T-cell (primary cell): ENCODE measurements at regions of chr1 and their contacts with region 1.

Region 1: DNA sequence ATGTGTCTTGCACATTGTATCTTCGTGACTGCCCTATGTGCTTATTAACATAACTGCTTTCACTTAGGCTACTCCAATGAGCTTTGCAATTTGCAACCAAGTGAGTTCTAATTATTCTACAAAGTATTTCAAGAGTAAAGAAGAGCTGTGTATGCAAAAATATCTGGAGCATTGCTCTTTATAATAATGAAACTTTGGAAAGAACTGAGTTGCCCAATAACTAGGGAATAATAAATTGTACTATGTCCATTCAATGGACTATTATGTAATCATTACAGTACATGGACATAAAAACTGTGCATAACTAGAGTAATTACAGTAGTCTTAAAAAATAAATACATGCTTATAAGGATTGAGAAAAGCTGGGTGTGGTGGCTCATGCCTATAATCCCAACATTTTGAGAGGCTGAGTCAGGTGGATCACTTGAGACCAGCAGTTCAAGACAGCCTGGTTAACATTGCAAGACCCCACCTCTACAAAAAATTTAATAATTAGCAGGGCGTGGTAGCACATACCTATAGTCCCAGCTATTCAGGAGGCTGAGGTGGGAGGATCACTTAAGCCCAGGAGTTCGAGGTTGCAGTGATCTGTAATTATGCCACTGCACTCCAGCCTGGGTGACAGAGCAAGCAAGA is 70.3 kb upstream of the JAK1 start:
- DNase-seq: no peak
- ATAC-seq: no peak
- H3K4me3 ChIP-seq: no peak overlapping the region
- H3K4me3 Mint-ChIP-seq: no peak overlapping the region
- H3K27ac ChIP-seq: no peak overlapping the region
- H3K27ac Mint-ChIP-seq: peak overlapping the region in 1 of 2 donors; percentile 11
- H3K4me1 ChIP-seq: no peaks in the 10 kb centered on the region
- H3K4me1 Mint-ChIP-seq: peaks cover 9 to 20% (median 10%) of the 10 kb centered on the region in 3 donors
- H3K27me3 ChIP-seq: no peaks in the 10 kb centered on the region
- H3K27me3 Mint-ChIP-seq: no peaks in the 10 kb centered on the region

Region 2: DNA sequence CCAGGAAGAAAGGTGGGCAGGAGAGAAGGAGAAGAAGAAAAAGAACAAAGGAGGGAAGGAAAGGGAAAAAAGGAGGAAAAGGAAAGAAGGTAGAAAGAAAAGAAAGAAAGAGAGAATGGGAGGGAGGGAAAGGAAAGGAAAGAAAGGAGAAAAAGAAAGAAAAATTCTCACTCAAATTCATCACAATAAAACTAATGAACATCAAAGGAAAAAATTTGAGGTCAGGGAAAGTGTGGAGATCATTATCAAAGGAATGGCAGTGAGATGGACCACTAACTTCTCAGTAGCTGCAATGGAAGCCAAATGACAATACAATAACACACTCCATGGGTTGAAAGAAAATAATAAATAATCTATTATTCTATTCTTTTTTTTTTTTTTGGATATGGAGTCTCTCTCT is 22.3 kb before region 1 on chr1:
- CTCF ChIA-PET with region 1: no interaction called
- POLR2A ChIA-PET with region 1: interaction called in 1 of 2 experiments, 10 read pairs
- DNase-seq: no peak
- ATAC-seq: no peak
- H3K4me3 ChIP-seq: no peak overlapping the region
- H3K4me3 Mint-ChIP-seq: no peak overlapping the region
- H3K27ac ChIP-seq: no peak overlapping the region
- H3K27ac Mint-ChIP-seq: no peak overlapping the region
- H3K4me1 ChIP-seq: peaks cover 9 to 17% of the 10 kb centered on the region in 2 experiments
- H3K4me1 Mint-ChIP-seq: peaks cover 25 to 30% (median 26%) of the 10 kb centered on the region in 3 donors
- H3K27me3 ChIP-seq: no peaks in the 10 kb centered on the region
- H3K27me3 Mint-ChIP-seq: no peaks in the 10 kb centered on the region